ENCODE measurements at regions of chr7 and their contacts with region 1.

Region 1: GRCh38 chr7:23055582-23056178 is 41.8 kb upstream of the HYCC1 start:
- DNase-seq: peak; percentile 81
- ATAC-seq: peak; percentile 98
- H3K4me3 ChIP-seq: no peak overlapping the region
- H3K4me3 Mint-ChIP-seq: no peak overlapping the region
- H3K27ac ChIP-seq: no peak overlapping the region
- H3K27ac Mint-ChIP-seq: no peak overlapping the region
- H3K4me1 ChIP-seq: no peaks in the 10 kb centered on the region
- H3K4me1 Mint-ChIP-seq: no peaks in the 10 kb centered on the region
- H3K27me3 ChIP-seq: no peaks in the 10 kb centered on the region
- H3K27me3 Mint-ChIP-seq: no peaks in the 10 kb centered on the region
- CTCF ChIP-seq: peak; percentile 94

Region 2: DNA sequence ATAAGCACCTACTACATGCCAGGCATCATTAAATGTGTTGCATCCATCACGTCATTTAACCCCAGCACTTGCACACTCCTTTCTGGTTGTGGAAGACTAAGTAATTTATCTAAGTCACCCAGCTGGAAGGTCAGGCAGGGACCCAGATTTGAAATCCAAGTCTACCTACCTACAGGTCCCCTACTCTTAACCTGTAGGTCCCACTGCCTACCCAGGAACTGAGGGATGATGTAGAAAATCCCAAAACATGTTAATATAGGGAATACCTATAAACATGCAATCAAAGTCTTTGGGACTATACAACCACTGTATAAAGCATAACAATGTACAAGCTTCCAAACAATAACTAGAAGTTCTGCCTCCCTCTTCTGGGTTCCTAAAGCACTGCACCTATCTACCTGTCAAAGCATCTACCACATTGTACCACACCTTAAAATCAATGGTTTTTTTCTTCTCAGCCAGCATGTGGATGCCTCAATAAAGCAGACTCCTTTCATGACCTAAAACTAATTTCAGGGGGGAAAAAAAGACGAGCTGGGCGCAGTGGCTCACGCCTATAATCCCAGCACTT is 323.0 kb before region 1 on chr7:
- CTCF ChIA-PET with region 1: interaction called, 86 read pairs
- POLR2A ChIA-PET with region 1: no interaction called
- intact Hi-C with region 1: no loop called
- DNase-seq: peak; percentile 52
- ATAC-seq: peak; percentile 53
- H3K4me3 ChIP-seq: no peak overlapping the region
- H3K4me3 Mint-ChIP-seq: no peak overlapping the region
- H3K27ac ChIP-seq: no peak overlapping the region
- H3K27ac Mint-ChIP-seq: no peak overlapping the region
- H3K4me1 ChIP-seq: peaks cover 21 to 27% of the 10 kb centered on the region in 2 donors
- H3K4me1 Mint-ChIP-seq: peaks cover 27% of the 10 kb centered on the region
- H3K27me3 ChIP-seq: peaks cover 0 to 6% (median 0%) of the 10 kb centered on the region in 4 experiments
- H3K27me3 Mint-ChIP-seq: peaks cover 19% of the 10 kb centered on the region
- CTCF ChIP-seq: peak; percentile 61

Region 3: GRCh38 chr7:22822486-22823141 is 233.1 kb before region 1 on chr7 and contains the start of gene TOMM7:
- CTCF ChIA-PET with region 1: interaction called, 13 read pairs
- POLR2A ChIA-PET with region 1: no interaction called
- intact Hi-C with region 1: loop called (anchors 1 kb)
- DNase-seq: peak; percentile 97
- ATAC-seq: peak; percentile 98
- H3K4me3 ChIP-seq: peak within 1 kb of the TSS; percentile 82 to 97 (median 94)
- H3K4me3 Mint-ChIP-seq: peak within 1 kb of the TSS; percentile 98
- H3K27ac ChIP-seq: peak within 1 kb of the TSS; percentile 79 to 81
- H3K27ac Mint-ChIP-seq: peak within 1 kb of the TSS; percentile 97
- H3K4me1 ChIP-seq: peaks cover 12 to 21% of the 10 kb centered on the region in 2 donors
- H3K4me1 Mint-ChIP-seq: peaks cover 32% of the 10 kb centered on the region
- H3K27me3 ChIP-seq: no peaks in the 10 kb centered on the region
- H3K27me3 Mint-ChIP-seq: peaks cover 10% of the 10 kb centered on the region
- CTCF ChIP-seq: no peak
- total RNA-seq, gene TOMM7: 400 and 437 TPM in 2 replicates

Region 4: GRCh38 chr7:22949944-22950343 is 105.7 kb before region 1 on chr7:
- CTCF ChIA-PET with region 1: interaction called, 5 read pairs
- POLR2A ChIA-PET with region 1: no interaction called
- intact Hi-C with region 1: loop called (anchors 10 kb)
- DNase-seq: no peak
- ATAC-seq: no peak
- H3K4me3 ChIP-seq: no peak overlapping the region
- H3K4me3 Mint-ChIP-seq: no peak overlapping the region
- H3K27ac ChIP-seq: no peak overlapping the region
- H3K27ac Mint-ChIP-seq: no peak overlapping the region
- H3K4me1 ChIP-seq: no peaks in the 10 kb centered on the region
- H3K4me1 Mint-ChIP-seq: no peaks in the 10 kb centered on the region
- H3K27me3 ChIP-seq: no peaks in the 10 kb centered on the region
- H3K27me3 Mint-ChIP-seq: no peaks in the 10 kb centered on the region
- CTCF ChIP-seq: no peak

Region 5: GRCh38 chr7:23013715-23014649 is 41.7 kb before region 1 on chr7 and contains the start of gene HYCC1:
- CTCF ChIA-PET with region 1: interaction called, 27 read pairs
- POLR2A ChIA-PET with region 1: no interaction called
- intact Hi-C with region 1: loop called (anchors 1 kb)
- DNase-seq: peak; percentile 99
- ATAC-seq: peak; percentile 96
- H3K4me3 ChIP-seq: peak within 1 kb of the TSS; percentile 68 to 85 (median 80)
- H3K4me3 Mint-ChIP-seq: peak within 1 kb of the TSS; percentile 99
- H3K27ac ChIP-seq: peak within 1 kb of the TSS; percentile 63 to 70
- H3K27ac Mint-ChIP-seq: peak within 1 kb of the TSS; percentile 98
- H3K4me1 ChIP-seq: peaks cover 73 to 74% of the 10 kb centered on the region in 2 donors
- H3K4me1 Mint-ChIP-seq: peaks cover 42% of the 10 kb centered on the region
- H3K27me3 ChIP-seq: no peaks in the 10 kb centered on the region
- H3K27me3 Mint-ChIP-seq: no peaks in the 10 kb centered on the region
- CTCF ChIP-seq: peak; percentile 72
- total RNA-seq, gene HYCC1: 39.6 and 40.8 TPM in 2 replicates

Measured in B cell (primary cell).